CD4-positive, alpha-beta T cell (primary cell): ENCODE measurements at regions of chr17 and their contacts with region 1.

Region 1: GRCh38 chr17:82105882-82106687 is 8.0 kb upstream of the FASN start:
- DNase-seq: peak in 13 of 14 experiments; percentile 32 to 78 (median 55)
- ATAC-seq: peak; percentile 70
- H3K4me3 ChIP-seq: peak overlapping the region; percentile 61
- H3K4me3 Mint-ChIP-seq: peak overlapping the region; percentile 83
- H3K27ac ChIP-seq: peak overlapping the region; percentile 79 to 90
- H3K27ac Mint-ChIP-seq: peak overlapping the region; percentile 95
- H3K4me1 ChIP-seq: peaks cover 43% of the 10 kb centered on the region
- H3K4me1 Mint-ChIP-seq: peaks cover 22% of the 10 kb centered on the region
- H3K27me3 ChIP-seq: no peaks in the 10 kb centered on the region
- H3K27me3 Mint-ChIP-seq: no peaks in the 10 kb centered on the region
- CTCF ChIP-seq: peak; percentile 36

Region 2: GRCh38 chr17:82120148-82120547 is 14.1 kb after region 1 on chr17:
- CTCF ChIA-PET with region 1: no interaction called
- POLR2A ChIA-PET with region 1: interaction called, 10 read pairs
- intact Hi-C with region 1: no loop called
- DNase-seq: peak in 7 of 14 experiments; percentile 37 to 72 (median 54)
- ATAC-seq: peak; percentile 93
- H3K4me3 ChIP-seq: no peak overlapping the region
- H3K4me3 Mint-ChIP-seq: peak overlapping the region; percentile 52
- H3K27ac ChIP-seq: no peak overlapping the region
- H3K27ac Mint-ChIP-seq: peak overlapping the region; percentile 92
- H3K4me1 ChIP-seq: peaks cover 56% of the 10 kb centered on the region
- H3K4me1 Mint-ChIP-seq: peaks cover 62% of the 10 kb centered on the region
- H3K27me3 ChIP-seq: no peaks in the 10 kb centered on the region
- H3K27me3 Mint-ChIP-seq: no peaks in the 10 kb centered on the region
- CTCF ChIP-seq: no peak